ENCODE measurements at regions of chr1 and their contacts with region 1.

Region 1: DNA sequence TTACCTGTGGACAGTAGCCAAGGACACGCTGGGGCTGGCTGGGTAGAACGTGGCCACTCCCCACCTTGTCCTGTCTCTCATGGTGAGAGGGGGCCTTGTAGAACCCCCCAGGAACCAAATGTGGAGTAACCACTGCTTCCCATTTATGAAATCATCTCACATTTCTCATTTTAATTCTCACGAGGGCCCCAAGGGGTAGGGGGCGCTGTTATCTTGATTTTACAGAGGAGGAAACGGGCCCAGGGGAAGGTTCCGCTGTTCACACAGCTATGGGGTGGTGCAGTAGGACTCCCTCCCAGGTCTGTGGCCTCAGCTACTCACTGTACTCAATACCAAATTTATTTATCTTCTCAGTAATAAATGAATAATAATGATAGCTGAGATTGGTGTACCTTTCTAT is 5.5 kb downstream of the SMPDL3B start:
- DNase-seq: peak; percentile 73 to 86 (median 85)
- H3K4me3 ChIP-seq: no peak overlapping the region
- H3K27ac ChIP-seq: peak overlapping the region in 1 of 2 experiments; percentile 54
- H3K4me1 ChIP-seq: peaks cover 0 to 29% (median 15%) of the 10 kb centered on the region in 4 experiments
- H3K27me3 ChIP-seq: no peaks in the 10 kb centered on the region

Region 2: GRCh38 chr1:27952147-27952546 is 11.8 kb after region 1 on chr1:
- CTCF ChIA-PET with region 1: interaction called, 14 read pairs
- POLR2A ChIA-PET with region 1: no interaction called
- DNase-seq: no peak
- H3K4me3 ChIP-seq: no peak overlapping the region
- H3K27ac ChIP-seq: no peak overlapping the region
- H3K4me1 ChIP-seq: no peaks in the 10 kb centered on the region
- H3K27me3 ChIP-seq: no peaks in the 10 kb centered on the region

Region 3: GRCh38 chr1:27959400-27960217 is 19.3 kb after region 1 on chr1 and contains the start of gene XKR8:
- CTCF ChIA-PET with region 1: interaction called, 12 read pairs
- POLR2A ChIA-PET with region 1: no interaction called
- DNase-seq: peak; percentile 82 to 91 (median 91)
- H3K4me3 ChIP-seq: peak within 1 kb of the TSS; percentile 49 to 93 (median 82)
- H3K27ac ChIP-seq: peak within 1 kb of the TSS; percentile 46 to 83
- H3K4me1 ChIP-seq: peaks cover 2 to 33% (median 23%) of the 10 kb centered on the region in 4 experiments
- H3K27me3 ChIP-seq: no peaks in the 10 kb centered on the region

Region 4: DNA sequence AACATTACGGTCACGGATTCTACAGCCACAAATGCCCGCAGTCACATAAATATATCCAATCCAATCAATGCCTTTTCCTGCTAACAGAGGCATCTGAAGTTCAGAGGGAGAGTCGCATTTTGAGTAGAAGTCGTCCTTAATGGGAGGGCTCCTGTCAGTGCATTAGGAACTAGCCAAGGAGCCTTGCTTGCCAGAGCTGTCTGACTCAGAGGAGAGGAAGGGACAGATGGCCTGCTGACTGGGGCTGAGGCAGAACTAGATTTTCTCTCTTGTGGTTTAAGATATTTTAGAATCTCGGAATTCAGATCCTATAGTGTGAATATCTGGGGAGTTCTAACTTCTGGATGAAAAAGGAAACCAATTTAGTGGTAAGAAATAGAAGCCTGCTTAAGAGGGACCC is 30.1 kb after region 1 on chr1:
- CTCF ChIA-PET with region 1: interaction called, 11 read pairs
- POLR2A ChIA-PET with region 1: no interaction called
- DNase-seq: no peak
- H3K4me3 ChIP-seq: no peak overlapping the region
- H3K27ac ChIP-seq: no peak overlapping the region
- H3K4me1 ChIP-seq: peaks cover 0 to 1% (median 0%) of the 10 kb centered on the region in 4 experiments
- H3K27me3 ChIP-seq: no peaks in the 10 kb centered on the region